ENCODE measurements at regions of chr3 and their contacts with region 1.

Region 1: GRCh38 chr3:112642912-112643506 is 2.1 kb upstream of the CCDC80 start:
- DNase-seq: no peak
- H3K4me3 ChIP-seq: peak overlapping the region in 1 of 2 donors; percentile 28
- H3K27ac ChIP-seq: peak overlapping the region; percentile 87
- H3K4me1 ChIP-seq: peaks cover 18% of the 10 kb centered on the region
- H3K27me3 ChIP-seq: no peaks in the 10 kb centered on the region
- CTCF ChIP-seq: peak; percentile 44 to 91 (median 89)
- POLR2A ChIP-seq: no peak

Region 2: DNA sequence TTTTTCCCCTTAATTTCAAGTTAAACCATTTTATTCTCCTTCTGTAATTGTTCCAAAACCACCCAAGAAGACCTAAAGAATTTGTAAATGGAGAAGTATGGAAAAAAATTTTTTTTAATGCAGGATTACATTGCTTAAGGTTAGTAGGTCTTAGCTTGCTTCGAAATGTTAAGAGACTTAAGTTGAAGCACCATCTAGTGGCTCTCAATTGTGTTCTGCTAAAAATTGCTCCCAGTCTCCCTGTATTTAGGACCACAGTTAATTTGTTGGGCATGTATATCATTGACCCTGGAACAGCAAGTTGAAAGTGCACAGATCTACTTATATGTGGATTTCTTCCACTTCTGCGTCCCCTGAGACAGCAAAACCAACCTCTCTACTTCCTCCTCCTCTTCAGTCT is 171.3 kb after region 1 on chr3:
- intact Hi-C with region 1: loop called (anchors 5 kb)
- DNase-seq: no peak
- H3K4me3 ChIP-seq: no peak overlapping the region
- H3K27ac ChIP-seq: peak overlapping the region; percentile 70
- H3K4me1 ChIP-seq: peaks cover 43% of the 10 kb centered on the region
- H3K27me3 ChIP-seq: no peaks in the 10 kb centered on the region
- CTCF ChIP-seq: peak in 2 of 3 experiments; percentile 64 to 70
- POLR2A ChIP-seq: no peak

Region 3: GRCh38 chr3:112984485-112984884 is 341.5 kb after region 1 on chr3:
- intact Hi-C with region 1: loop called (anchors 10 kb)
- DNase-seq: no peak
- H3K4me3 ChIP-seq: no peak overlapping the region
- H3K27ac ChIP-seq: no peak overlapping the region
- H3K4me1 ChIP-seq: no peaks in the 10 kb centered on the region
- H3K27me3 ChIP-seq: no peaks in the 10 kb centered on the region
- CTCF ChIP-seq: no peak
- POLR2A ChIP-seq: no peak